ENCODE measurements at regions of chr20 and their contacts with region 1.

Region 1: GRCh38 chr20:5205348-5206210 is 78.8 kb downstream of the CDS2 start:
- H3K4me3 Mint-ChIP-seq: no peak overlapping the region
- H3K27ac Mint-ChIP-seq: no peak overlapping the region
- H3K4me1 Mint-ChIP-seq: peaks cover 13% of the 10 kb centered on the region
- H3K27me3 Mint-ChIP-seq: no peaks in the 10 kb centered on the region

Region 2: DNA sequence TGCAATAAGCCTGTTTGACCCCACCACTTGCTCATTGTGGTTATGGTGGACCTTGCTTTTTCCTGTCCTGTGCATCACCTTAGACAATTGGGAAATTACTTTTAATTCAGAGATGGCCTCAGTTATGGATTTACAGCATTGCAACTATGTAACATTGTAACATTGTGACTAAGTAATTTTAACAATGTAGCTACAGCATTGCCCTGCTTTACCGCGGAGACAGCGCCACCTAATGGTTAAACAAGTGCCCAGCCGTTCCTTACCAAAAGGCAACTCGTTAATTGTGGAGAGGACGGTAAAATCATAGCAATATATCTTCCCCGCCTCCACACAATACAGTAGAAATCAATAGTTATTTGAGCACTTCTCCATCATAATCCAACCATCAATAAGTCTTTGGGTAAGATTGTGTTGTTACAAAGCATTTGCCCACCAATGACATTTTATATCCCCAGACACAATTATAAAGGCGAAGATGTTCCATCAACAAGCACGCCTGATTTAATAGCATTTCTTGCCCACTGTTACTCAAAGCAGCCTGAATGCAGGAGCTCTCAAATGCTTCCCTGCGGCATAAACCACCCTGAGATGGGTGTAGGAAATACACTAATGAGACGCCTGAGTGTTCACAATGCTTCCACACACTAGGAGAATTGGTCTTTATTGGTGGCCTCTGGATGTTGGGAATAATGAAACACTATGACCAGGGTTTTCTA is 17.5 kb after region 1 on chr20:
- intact Hi-C with region 1: loop called (anchors 1 kb)
- H3K4me3 Mint-ChIP-seq: no peak overlapping the region
- H3K27ac Mint-ChIP-seq: no peak overlapping the region
- H3K4me1 Mint-ChIP-seq: peaks cover 25% of the 10 kb centered on the region
- H3K27me3 Mint-ChIP-seq: peaks cover 15% of the 10 kb centered on the region

Region 3: DNA sequence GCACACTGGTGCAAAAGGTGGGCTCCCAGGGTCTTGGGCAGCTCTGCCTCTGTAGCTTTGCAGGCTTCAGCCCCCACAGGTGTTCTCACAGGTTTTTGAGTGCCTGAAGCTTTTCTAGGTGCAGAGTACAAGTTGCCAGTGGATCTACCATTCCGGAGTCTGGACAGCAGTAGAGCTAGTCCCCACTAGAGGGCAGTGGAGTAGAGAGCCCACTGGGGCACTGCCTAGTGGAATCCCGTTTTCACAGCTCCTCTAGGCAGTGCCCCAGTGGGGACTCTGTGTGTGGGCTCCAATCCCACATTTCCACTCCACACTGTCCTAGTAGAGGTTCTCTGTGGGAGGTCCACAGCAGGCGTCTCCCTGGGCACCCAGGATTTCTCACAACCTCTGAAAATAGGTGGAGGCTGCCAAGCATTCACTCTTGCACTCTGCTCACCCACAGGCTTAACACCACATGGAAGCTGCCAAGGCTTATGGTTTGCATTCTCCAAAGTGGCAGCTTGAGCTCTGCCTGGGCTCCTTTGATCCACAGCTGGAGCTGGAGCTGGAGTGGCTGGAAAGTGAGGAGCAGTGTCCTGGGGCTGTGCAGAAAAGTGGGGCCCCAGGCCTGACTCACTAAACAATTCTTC is 197.4 kb after region 1 on chr20:
- intact Hi-C with region 1: no loop called
- H3K4me3 Mint-ChIP-seq: no peak overlapping the region
- H3K27ac Mint-ChIP-seq: no peak overlapping the region
- H3K4me1 Mint-ChIP-seq: peaks cover 5% of the 10 kb centered on the region
- H3K27me3 Mint-ChIP-seq: peaks cover 2% of the 10 kb centered on the region

Region 4: GRCh38 chr20:5448449-5449118 is 243.0 kb after region 1 on chr20:
- intact Hi-C with region 1: loop called (anchors 2 kb)
- H3K4me3 Mint-ChIP-seq: no peak overlapping the region
- H3K27ac Mint-ChIP-seq: no peak overlapping the region
- H3K4me1 Mint-ChIP-seq: no peaks in the 10 kb centered on the region
- H3K27me3 Mint-ChIP-seq: peaks cover 16% of the 10 kb centered on the region